Tibial artery (tissue), 4 donors: ENCODE measurements at regions of chr16 and their contacts with region 1.

Region 1: DNA sequence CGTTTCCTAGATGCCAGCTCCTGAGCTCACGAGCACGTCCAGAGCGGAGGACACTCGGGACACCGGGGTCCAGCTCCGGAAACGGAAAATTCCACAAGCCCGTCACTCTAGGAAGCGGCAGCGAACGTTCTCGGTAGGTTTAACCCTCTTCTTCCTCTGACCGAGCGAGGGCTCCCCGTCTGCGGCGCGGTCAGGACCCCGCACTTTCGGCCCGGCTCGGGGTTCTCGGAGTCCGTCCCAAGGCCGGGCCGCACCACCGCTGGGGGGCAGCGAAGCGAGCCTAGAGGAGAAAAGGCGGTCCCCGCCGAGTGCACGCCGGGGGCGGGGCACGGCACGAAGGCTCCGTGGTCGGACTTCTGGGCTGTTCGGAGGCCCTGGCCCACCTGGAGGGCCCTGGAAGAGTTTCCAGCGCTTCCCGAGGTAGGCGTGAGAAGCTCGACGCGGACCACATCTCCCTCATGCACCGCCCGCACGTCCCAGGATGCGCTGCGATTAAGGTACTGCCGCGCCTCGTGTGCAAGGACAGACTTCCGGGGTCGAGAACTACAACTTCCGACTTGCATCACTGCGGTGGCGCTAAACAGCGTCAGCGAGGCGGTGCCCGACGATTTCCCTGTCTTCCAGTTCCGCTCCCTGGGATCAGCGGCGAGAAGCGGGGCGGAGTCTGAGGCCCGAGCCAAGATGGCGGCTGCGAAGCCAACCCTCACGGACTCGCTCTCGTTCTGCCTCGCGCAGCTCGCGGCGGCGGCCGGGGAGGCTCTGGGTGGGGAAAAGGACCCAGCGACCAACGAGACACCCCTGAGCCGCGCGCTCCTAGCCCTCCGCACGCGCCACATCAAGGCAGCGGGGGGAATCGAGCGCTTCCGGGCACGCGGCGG is at the start of gene ARMC5:
- DNase-seq: peak; percentile 96 to 99
- H3K4me3 ChIP-seq: peak within 1 kb of the TSS; percentile 65 to 66
- H3K27ac ChIP-seq: peak within 1 kb of the TSS; percentile 98 to 99
- H3K4me1 ChIP-seq: peaks cover 0 to 53% (median 50%) of the 10 kb centered on the region in 4 donors
- H3K27me3 ChIP-seq: no peaks in the 10 kb centered on the region
- CTCF ChIP-seq: peak; percentile 57 to 61

Region 2: GRCh38 chr16:31474173-31474714 is 15.2 kb after region 1 on chr16:
- intact Hi-C with region 1: loop called (anchors 2 kb)
- DNase-seq: peak in 1 of 2 donors; percentile 55
- H3K4me3 ChIP-seq: no peak overlapping the region
- H3K27ac ChIP-seq: peak overlapping the region in 1 of 2 donors; percentile 99
- H3K4me1 ChIP-seq: peaks cover 0 to 30% (median 26%) of the 10 kb centered on the region in 4 donors
- H3K27me3 ChIP-seq: no peaks in the 10 kb centered on the region
- CTCF ChIP-seq: no peak

Region 3: DNA sequence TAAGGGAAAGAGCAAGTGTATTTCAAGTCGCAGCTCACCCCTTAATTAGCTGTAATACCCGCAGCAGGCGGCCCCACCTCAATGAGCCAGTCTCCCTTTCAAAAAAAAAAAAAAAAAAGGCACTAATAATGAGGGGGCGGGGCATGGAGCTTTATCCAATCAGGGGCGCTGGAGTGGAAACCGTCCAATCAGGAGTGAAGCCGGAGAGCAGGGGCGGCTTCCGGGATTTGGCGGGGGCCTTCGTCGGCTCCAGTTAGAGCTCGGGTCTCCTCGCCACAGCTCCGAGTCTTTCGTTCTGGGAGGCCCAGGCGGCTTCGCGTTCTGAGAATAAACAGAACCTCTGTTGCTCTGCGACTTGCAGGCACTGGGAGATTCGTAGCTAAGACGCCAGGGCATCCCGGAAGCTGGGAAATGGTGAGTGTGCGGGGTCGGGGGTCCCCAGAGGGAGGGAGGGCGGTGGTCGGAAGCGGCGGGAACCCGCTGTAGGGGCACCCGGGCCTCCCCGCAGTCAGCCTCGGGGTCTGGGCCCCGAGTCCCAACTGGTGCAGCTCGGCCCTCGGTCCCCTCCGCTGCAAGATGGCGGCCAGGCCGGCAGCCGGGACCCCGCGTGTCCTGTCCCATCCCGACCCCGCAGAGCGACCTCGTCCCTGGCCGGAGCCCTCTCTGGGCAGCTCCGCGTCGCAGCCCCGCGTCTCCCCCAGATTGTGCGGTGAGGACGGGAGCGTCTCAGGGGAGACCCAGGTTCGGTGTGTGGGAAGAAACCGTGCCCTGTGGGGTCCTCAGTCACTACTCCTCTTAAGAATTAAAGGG is 414.7 kb after region 1 on chr16 and contains the start of gene ZNF267:
- intact Hi-C with region 1: loop called (anchors 10 kb)
- DNase-seq: peak; percentile 97 to 98
- H3K4me3 ChIP-seq: peak within 1 kb of the TSS; percentile 98
- H3K27ac ChIP-seq: peak within 1 kb of the TSS; percentile 92 to 94
- H3K4me1 ChIP-seq: peaks cover 0 to 49% (median 29%) of the 10 kb centered on the region in 4 donors
- H3K27me3 ChIP-seq: no peaks in the 10 kb centered on the region
- CTCF ChIP-seq: no peak